ENCODE measurements at regions of chrX and their contacts with region 1.

Region 1: DNA sequence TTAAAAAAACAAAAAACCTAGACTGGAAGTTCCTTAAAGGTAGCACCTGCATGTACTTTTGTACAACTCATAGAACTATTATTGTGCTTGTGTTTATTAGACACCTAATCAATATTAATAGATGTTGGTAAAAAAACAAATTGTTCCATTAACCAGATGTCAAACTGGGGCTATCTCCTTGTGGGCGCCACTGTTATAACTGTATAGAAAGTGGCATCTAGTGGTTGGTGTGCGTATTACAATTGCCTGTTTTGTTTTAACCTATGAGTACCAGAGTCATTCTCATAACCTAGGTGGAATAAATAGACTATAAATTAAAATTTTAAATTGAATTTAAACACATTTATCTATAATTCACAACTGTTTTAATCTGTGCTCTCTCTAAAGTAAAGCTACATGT is 97.4 kb downstream of the COL4A5 start:
- DNase-seq: peak; percentile 47
- H3K4me3 ChIP-seq: no peak overlapping the region
- H3K27ac ChIP-seq: no peak overlapping the region
- H3K4me1 ChIP-seq: no peaks in the 10 kb centered on the region
- H3K27me3 ChIP-seq: no peaks in the 10 kb centered on the region
- CTCF ChIP-seq: peak; percentile 29 to 37
- POLR2A ChIP-seq: no peak

Region 2: DNA sequence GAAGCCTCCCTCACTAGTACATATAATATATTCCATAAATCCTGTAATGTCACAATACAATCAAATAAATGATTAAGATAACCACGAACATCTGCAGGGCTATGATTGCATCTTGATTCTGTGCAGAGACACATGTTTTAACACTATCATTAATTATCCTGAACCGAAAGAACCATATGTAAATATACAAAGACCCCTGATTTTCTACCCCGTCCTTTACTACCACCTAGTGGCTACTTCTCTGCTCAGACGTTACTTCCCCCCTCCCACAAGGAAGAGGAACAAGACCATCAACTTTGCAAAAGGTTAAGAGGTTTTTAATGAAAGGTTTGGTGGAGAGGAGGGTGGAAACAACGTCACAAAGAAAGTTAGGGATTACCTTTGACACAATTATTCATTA is 232.8 kb before region 1 on chrX:
- CTCF ChIA-PET with region 1: interaction called, 5 read pairs
- POLR2A ChIA-PET with region 1: no interaction called
- dilution Hi-C with region 1: no loop called
- intact Hi-C with region 1: loop called (anchors 10 kb)
- DNase-seq: peak; percentile 30
- H3K4me3 ChIP-seq: no peak overlapping the region
- H3K27ac ChIP-seq: no peak overlapping the region
- H3K4me1 ChIP-seq: no peaks in the 10 kb centered on the region
- H3K27me3 ChIP-seq: no peaks in the 10 kb centered on the region
- CTCF ChIP-seq: peak in 1 of 2 donors; percentile 26
- POLR2A ChIP-seq: no peak

Measured in endothelial cell of umbilical vein (primary cell).